ENCODE measurements at regions of chr13 and their contacts with region 1.

Region 1: DNA sequence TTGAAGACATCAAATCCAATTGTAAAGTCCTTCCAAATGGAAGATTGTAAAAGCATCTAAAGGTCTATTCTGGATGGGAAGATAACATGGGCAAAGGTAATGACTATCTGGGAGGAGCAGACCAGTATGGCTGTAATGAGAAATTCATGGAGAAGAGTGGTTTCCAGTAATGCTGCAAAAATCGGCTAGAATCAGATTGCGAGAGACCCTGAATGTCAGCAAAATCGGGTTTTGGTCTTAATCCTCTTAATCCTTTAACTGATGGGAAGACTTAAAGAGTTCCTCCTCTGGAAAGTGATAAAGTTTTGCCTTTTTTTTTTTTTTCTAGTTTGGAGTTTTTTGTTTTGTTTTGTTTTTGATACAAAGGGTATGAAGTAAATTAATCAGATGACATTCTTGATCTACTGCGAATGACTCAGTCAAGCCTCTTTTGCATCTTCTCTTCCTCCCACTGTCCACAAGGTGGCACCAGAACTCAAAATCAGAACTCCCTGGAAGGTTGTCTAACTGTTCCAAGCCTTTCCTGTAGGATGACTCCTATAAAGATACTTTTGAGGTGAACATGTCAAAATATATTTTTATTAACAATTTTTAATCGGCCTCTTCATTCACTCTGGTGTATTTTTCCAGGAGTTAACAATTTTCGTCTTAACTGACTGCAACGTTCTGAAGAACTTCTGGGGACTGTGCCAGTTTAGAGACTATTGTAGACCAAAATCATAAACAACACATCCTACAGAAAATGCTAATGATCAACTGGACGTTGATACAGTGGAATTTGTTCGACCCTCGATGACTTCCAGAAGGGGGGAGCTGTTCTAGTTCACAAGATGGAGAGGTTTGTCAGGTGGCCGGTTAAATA is 213.3 kb upstream of the MIR17HG start:
- DNase-seq: peak; percentile 37
- H3K4me3 ChIP-seq: no peak overlapping the region
- H3K27ac ChIP-seq: peak overlapping the region in 1 of 2 experiments; percentile 34; a peak in 1 of 4 replicates
- H3K4me1 ChIP-seq: peaks cover 0 to 2% of the 10 kb centered on the region in 2 experiments; a peak in 2 of 4 replicates
- H3K27me3 ChIP-seq: no peaks in the 10 kb centered on the region
- CTCF ChIP-seq: peak; percentile 90
- EP300 ChIP-seq: no peak
- RAD21 ChIP-seq: peak; percentile 94

Region 2: DNA sequence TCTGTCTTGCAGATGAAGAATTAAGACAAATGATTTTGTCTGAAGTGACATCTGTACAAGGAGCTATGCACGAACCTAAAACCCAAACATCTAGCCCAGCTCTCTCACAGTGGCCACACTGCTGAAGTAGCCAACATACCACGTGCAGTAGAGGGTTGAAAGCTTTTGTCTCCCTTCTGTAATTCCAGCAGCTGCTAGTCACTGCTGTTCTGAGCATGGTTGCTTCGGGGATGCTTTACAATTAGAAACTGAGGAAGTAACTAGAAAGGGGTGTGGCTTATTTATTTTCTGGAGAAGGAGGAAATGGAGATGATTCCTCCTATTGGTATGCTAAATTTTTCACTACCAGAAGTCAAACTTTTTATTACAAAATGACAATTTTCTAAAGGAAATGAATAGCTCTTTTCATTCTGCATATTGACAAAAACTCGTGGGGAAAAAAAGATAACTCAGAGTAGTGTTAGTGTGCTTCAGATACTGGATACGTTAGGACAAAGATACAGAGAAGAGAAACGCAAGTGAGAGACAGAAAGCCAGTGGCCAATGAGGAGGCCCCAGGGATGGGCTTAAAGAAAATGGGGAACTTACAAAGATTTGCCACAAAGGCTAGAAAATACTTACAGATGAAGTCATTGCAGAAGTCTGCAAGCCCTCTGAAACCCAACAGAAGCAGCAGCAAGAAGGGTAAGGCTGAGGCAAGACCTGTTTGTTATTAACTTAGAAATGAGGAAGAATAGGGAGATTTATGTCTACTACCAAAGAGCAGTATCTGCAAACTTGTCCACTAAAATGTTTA is 20.6 kb after region 1 on chr13:
- CTCF ChIA-PET with region 1: interaction called, 53 read pairs
- POLR2A ChIA-PET with region 1: no interaction called
- DNase-seq: no peak
- H3K4me3 ChIP-seq: no peak overlapping the region
- H3K27ac ChIP-seq: peak overlapping the region in 1 of 2 experiments; percentile 91; a peak in 2 of 4 replicates
- H3K4me1 ChIP-seq: peaks cover 0 to 23% of the 10 kb centered on the region in 2 experiments; a peak in 2 of 4 replicates
- H3K27me3 ChIP-seq: no peaks in the 10 kb centered on the region
- CTCF ChIP-seq: no peak
- EP300 ChIP-seq: no peak
- RAD21 ChIP-seq: no peak

Region 3: DNA sequence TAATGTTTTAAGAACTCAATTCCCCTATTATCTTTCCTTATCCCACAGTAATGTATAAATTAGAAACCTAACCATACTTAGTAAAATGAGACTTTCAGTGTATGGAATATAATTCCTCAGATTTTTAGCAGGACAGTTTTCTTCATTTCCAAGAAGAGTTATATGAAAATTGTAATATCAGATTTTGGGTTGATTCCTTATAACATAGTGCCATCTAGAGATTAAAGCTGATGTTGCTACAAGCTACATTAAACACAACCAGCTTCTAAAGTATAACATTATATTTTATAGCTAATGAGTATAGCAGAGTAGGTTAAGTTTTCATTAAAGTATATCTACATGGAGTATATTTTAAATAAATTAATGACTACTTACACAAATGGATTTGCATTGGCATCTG is 113.6 kb after region 1 on chr13:
- CTCF ChIA-PET with region 1: interaction called, 19 read pairs
- POLR2A ChIA-PET with region 1: no interaction called
- DNase-seq: peak; percentile 19
- H3K4me3 ChIP-seq: no peak overlapping the region
- H3K27ac ChIP-seq: no peak overlapping the region
- H3K4me1 ChIP-seq: no peaks in the 10 kb centered on the region
- H3K27me3 ChIP-seq: no peaks in the 10 kb centered on the region; the same call in 1 of the 2 replicates
- CTCF ChIP-seq: peak; percentile 57
- EP300 ChIP-seq: no peak
- RAD21 ChIP-seq: peak; percentile 75

Region 4: GRCh38 chr13:91498298-91498697 is 364.1 kb after region 1 on chr13:
- CTCF ChIA-PET with region 1: no interaction called
- POLR2A ChIA-PET with region 1: no interaction called
- DNase-seq: no peak
- H3K4me3 ChIP-seq: no peak overlapping the region
- H3K27ac ChIP-seq: no peak overlapping the region
- H3K4me1 ChIP-seq: no peaks in the 10 kb centered on the region
- H3K27me3 ChIP-seq: no peaks in the 10 kb centered on the region
- CTCF ChIP-seq: no peak
- EP300 ChIP-seq: no peak
- RAD21 ChIP-seq: no peak

Measured in SK-N-SH (cell line).